Activated T-helper 1 cell treated with anti-CD3 and anti-CD28 coated beads, Interleukin-12 subunit alpha, Interleukin-12 subunit beta, Interleukin-2, Interleukin-4 antibody, amounts not matched to agents 30 ng/mL and 10 ng/mL and 1 ng/mL, durations not matched to agents 14 hours and 24 hours and 36 hours (primary cell): ENCODE measurements at regions of chr17 and their contacts with region 1.

Region 1: GRCh38 chr17:32519228-32520103 is 32.7 kb downstream of the CDK5R1 start:
- DNase-seq: peak; percentile 56
- H3K4me3 Mint-ChIP-seq: peak overlapping the region; percentile 88
- H3K27ac Mint-ChIP-seq: peak overlapping the region; percentile 97
- H3K4me1 Mint-ChIP-seq: peaks cover 82% of the 10 kb centered on the region
- H3K27me3 Mint-ChIP-seq: peaks cover 7% of the 10 kb centered on the region

Region 2: DNA sequence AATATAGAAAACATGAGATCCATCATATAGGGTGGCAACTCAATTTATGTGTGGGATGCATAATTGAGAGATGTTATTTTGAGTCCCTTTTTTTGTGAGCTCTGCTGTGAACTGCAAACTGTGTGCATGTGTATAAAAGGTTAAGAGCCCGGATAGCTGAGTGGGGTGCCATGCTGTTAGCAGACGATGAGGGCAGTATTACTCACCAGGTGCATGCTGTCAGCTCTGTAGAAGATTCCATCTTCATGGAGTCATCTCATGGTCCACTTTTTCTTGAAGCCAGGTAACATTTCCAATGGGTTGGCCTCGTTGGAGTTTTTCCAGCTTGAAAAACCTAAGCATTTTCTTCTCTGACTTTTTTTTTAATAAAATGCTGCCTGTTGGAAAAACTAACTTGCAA is 296.8 kb before region 1 on chr17:
- intact Hi-C with region 1: loop called (anchors 5 kb)
- DNase-seq: no peak
- H3K4me3 Mint-ChIP-seq: no peak overlapping the region
- H3K27ac Mint-ChIP-seq: no peak overlapping the region
- H3K4me1 Mint-ChIP-seq: peaks cover 19% of the 10 kb centered on the region
- H3K27me3 Mint-ChIP-seq: no peaks in the 10 kb centered on the region

Region 3: DNA sequence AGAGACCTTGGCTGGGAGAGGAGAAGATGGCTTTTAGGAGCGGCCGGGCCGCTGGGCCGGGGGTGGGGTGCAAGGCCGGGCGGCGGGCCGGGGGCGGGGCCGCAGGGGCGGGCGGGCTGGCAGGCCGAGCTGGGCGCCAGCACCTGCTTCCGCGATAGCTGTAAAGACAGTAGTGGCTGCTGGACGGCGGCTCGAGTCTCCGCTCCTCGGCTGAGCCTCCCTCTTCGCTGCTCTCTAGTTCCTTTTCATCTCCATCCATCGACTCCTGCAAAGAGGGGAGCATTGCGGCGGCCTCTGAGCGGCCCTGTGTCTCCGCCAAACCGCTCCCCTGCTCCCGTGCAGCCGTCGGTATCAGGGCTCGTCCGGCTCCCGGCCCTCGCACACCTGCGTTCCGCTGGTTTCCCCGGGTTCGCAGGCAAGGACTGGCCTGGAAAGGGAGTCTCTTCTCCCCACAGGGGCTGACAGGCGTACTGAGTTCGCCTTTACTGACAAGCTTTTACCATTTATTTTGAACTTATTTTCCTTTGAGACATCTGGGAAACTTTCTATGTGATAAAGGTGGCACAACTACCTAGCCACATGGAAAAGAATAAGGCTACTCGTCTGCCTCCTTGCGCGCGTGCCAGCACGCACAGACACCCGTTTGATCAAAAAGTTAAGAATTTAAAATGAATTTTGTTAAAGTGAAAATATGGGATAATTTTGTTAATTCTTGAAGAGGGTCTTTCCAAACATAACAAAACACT is 177.4 kb before region 1 on chr17 and contains the start of gene C17orf75:
- intact Hi-C with region 1: no loop called
- DNase-seq: peak; percentile 72
- H3K4me3 Mint-ChIP-seq: peak within 1 kb of the TSS; percentile 94
- H3K27ac Mint-ChIP-seq: peak within 1 kb of the TSS; percentile 97
- H3K4me1 Mint-ChIP-seq: peaks cover 27% of the 10 kb centered on the region
- H3K27me3 Mint-ChIP-seq: no peaks in the 10 kb centered on the region
- total RNA-seq, gene C17orf75: 34.1 and 37.6 TPM in 2 replicates

Region 4: GRCh38 chr17:32486111-32486700 is 33.3 kb before region 1 on chr17:
- intact Hi-C with region 1: loop called (anchors 1 kb)
- DNase-seq: peak; percentile 60
- H3K4me3 Mint-ChIP-seq: peak overlapping the region; percentile 79
- H3K27ac Mint-ChIP-seq: peak overlapping the region; percentile 65
- H3K4me1 Mint-ChIP-seq: peaks cover 20% of the 10 kb centered on the region
- H3K27me3 Mint-ChIP-seq: peaks cover 3% of the 10 kb centered on the region

Region 5: GRCh38 chr17:32551186-32551955 is 31.9 kb after region 1 on chr17:
- intact Hi-C with region 1: loop called (anchors 1 kb)
- DNase-seq: no peak
- H3K4me3 Mint-ChIP-seq: peak overlapping the region; percentile 32
- H3K27ac Mint-ChIP-seq: peak overlapping the region; percentile 35
- H3K4me1 Mint-ChIP-seq: peaks cover 58% of the 10 kb centered on the region
- H3K27me3 Mint-ChIP-seq: peaks cover 4% of the 10 kb centered on the region

Region 6: GRCh38 chr17:32877164-32877764 is 357.8 kb after region 1 on chr17:
- intact Hi-C with region 1: loop called (anchors 5 kb)
- DNase-seq: peak; percentile 92
- H3K4me3 Mint-ChIP-seq: peak overlapping the region; percentile 66
- H3K27ac Mint-ChIP-seq: peak overlapping the region; percentile 37
- H3K4me1 Mint-ChIP-seq: peaks cover 21% of the 10 kb centered on the region
- H3K27me3 Mint-ChIP-seq: peaks cover 18% of the 10 kb centered on the region

Region 7: DNA sequence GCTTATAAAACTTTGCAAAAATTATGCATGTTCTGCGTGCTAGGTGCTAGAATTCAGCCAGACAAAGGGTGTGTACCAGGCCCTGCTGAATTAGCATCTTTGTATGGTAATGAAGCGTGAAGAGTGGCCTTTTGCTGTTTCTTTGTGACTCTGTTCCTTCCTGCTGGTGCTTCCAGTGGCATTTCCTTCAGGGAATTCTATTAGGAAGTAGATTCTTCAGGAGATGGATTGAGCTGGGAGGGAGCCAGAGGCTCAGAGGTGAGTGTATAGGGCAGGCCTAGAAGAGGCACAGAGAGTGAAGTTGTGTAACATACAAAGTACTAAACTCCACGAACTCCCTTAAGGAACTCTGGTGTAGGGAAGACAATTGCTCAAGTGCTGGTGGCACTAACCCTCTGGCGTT is 847.5 kb after region 1 on chr17:
- intact Hi-C with region 1: no loop called
- DNase-seq: no peak
- H3K4me3 Mint-ChIP-seq: no peak overlapping the region
- H3K27ac Mint-ChIP-seq: no peak overlapping the region
- H3K4me1 Mint-ChIP-seq: no peaks in the 10 kb centered on the region
- H3K27me3 Mint-ChIP-seq: no peaks in the 10 kb centered on the region